ENCODE measurements at regions of chr20 and their contacts with region 1.

Region 1: GRCh38 chr20:22861229-22861980 is 173.7 kb upstream of the SSTR4 start:
- DNase-seq: no peak

Region 2: DNA sequence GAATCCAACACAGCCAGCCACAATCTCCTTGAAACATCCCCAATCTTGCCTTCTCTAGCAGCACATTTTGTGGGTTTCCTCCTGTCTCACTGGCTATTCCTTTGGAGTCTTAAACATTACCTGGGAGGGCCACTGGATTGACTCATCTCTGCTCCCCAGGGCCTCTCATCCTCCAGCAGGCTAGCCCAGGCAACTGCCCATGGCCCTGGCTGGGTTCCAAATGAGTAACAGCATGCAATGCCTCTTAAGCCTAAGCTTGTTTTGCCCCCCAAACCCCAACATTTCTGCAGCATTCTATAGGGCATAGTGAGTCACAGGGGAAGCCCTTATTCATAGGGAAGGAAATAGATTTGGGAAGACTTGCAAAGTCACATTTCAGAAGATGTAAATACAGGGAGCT is 481.9 kb before region 1 on chr20:
- intact Hi-C with region 1: no loop called
- DNase-seq: no peak

Region 3: DNA sequence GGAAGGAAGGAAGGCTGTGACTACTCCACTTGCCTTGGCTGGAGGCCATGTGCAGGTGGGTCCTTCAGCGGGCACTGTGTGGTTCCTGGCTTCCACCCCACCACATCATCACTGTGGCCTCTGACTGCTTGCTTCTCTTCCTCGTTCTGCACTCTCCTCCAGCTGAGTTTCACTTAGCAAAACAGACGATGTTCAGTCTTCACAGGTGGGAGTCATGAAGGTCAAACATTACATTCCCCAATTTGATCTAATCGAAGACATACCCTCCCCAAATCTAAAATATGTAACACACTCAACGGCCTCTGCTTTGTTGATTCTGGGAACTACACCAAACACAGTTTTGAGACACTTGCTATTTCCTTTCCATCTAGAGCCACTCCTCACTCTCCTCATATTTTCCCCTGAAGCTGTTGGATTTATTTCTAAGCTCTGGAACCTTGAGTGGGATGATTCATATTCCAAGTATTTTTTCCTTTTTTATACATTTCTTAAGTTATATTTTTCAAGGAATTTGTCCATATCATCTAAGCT is 144.5 kb before region 1 on chr20:
- intact Hi-C with region 1: loop called (anchors 5 kb)
- DNase-seq: no peak

Region 4: DNA sequence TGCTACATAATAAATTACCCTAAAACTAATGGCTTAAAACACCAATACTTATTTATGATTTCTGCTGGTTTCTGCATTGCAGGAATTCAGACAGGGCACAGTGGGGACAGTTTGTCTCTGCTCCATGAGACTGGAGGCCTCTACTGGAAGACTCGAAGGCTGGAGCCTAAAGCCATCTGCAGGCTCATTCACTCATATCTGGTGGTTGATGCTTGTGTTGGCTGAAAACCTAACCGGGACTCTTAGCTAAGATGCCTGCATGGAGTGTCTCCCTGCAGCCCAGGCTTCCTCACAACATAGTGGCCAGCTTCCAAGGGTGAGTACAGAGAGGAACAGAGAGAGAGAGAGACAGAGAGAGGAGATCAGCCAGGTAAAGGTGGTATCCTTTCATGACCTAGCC is 81.5 kb before region 1 on chr20:
- intact Hi-C with region 1: no loop called
- DNase-seq: no peak

Region 5: DNA sequence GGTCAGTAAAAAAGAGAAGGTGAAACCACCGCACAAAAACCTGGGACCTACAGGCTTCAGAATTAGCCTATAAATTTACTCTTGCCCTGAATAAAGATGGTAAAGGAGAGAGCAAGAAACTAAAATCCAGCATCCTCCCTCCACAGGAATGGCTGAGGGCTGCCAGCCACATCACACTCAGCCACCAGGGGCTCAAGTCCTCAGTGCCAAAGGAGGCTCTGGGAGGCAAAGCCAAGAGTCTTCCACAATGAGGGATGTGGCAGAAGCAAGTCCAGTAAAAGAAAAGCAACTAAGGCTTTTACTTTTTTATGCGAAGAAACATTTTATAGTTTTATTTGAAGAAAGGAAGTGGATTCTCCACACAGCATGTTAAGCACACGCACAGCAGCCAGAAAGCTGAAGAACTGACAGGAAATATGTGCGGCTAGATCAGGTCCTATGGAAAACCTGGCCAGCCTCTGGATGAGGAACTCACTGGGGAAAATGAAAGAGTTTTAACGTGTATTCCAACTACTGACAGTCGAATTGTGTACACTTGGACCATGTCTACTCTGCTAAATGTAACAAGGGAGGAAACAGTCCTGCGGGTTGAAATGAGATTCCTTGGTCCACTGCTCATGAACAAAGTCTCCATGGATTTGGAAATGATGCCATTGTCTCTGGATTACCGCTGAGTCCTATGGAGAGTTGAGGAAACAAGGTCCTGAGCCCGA is 45.6 kb before region 1 on chr20:
- intact Hi-C with region 1: no loop called
- DNase-seq: no peak

Region 6: GRCh38 chr20:22827874-22828273 is 33.5 kb before region 1 on chr20:
- intact Hi-C with region 1: no loop called
- DNase-seq: no peak

Region 7: GRCh38 chr20:22977059-22977785 is 115.8 kb after region 1 on chr20:
- intact Hi-C with region 1: loop called (anchors 5 kb)
- DNase-seq: no peak

Region 8: GRCh38 chr20:23235173-23236027 is 374.0 kb after region 1 on chr20:
- intact Hi-C with region 1: loop called (anchors 10 kb)
- DNase-seq: peak; percentile 87